ENCODE measurements at regions of chr16 and their contacts with region 1.

Region 1: DNA sequence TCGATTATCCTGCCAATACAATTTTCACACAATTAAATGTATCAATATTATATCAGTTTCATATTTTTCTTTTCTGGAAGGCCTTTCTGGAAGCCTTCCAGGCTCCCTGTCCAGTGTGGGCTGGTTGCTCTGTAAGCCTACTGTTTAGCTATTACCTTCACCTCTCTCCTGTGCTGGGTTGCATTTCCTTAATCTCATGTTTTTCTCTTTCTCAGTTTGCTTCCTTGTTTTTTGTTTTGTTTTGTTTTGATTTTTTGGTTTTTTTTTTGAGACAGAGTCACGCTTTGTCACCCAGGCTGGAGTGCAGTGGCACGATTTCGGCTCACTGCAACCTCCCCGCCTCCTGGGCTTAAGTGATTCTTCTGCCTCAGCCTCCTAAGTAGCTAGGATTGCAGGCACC is 6.8 kb downstream of the SEPHS2 start:
- DNase-seq: no peak
- H3K27ac ChIP-seq: no peak overlapping the region
- CTCF ChIP-seq: no peak

Region 2: GRCh38 chr16:30407102-30407803 is 31.6 kb before region 1 on chr16 and contains the start of gene ZNF771:
- CTCF ChIA-PET with region 1: no interaction called
- POLR2A ChIA-PET with region 1: no interaction called
- DNase-seq: peak; percentile 86
- H3K27ac ChIP-seq: peak within 1 kb of the TSS; percentile 76
- CTCF ChIP-seq: no peak

Region 3: GRCh38 chr16:30449116-30449435 is 10.2 kb after region 1 on chr16:
- CTCF ChIA-PET with region 1: no interaction called
- POLR2A ChIA-PET with region 1: no interaction called
- DNase-seq: no peak
- H3K27ac ChIP-seq: no peak overlapping the region
- CTCF ChIP-seq: no peak

Region 4: GRCh38 chr16:30472328-30472942 is 33.6 kb after region 1 on chr16 and contains the start of gene ITGAL:
- CTCF ChIA-PET with region 1: no interaction called
- POLR2A ChIA-PET with region 1: no interaction called
- DNase-seq: no peak
- H3K27ac ChIP-seq: 0 out of 2 replicates have a peak within 1 kb of the TSS, but pooled peaks have one; percentile 7
- CTCF ChIP-seq: no peak

Region 5: GRCh38 chr16:30499284-30499683 is 60.4 kb after region 1 on chr16:
- CTCF ChIA-PET with region 1: no interaction called
- POLR2A ChIA-PET with region 1: interaction called, 14 read pairs
- DNase-seq: no peak
- H3K27ac ChIP-seq: no peak overlapping the region
- CTCF ChIP-seq: no peak